ENCODE measurements at regions of chr6 and their contacts with region 1.

Region 1: GRCh38 chr6:11144393-11144851 is 32.9 kb upstream of the ERVFRD-1 start:
- DNase-seq: peak; percentile 81
- H3K4me3 Mint-ChIP-seq: no peak overlapping the region
- H3K27ac Mint-ChIP-seq: peak overlapping the region; percentile 87
- H3K4me1 Mint-ChIP-seq: peaks cover 36% of the 10 kb centered on the region
- H3K27me3 Mint-ChIP-seq: no peaks in the 10 kb centered on the region
- CTCF ChIP-seq: peak; percentile 91

Region 2: GRCh38 chr6:10676403-10676802 is 468.0 kb before region 1 on chr6:
- CTCF ChIA-PET with region 1: no interaction called
- POLR2A ChIA-PET with region 1: no interaction called
- intact Hi-C with region 1: no loop called
- DNase-seq: no peak
- H3K4me3 Mint-ChIP-seq: no peak overlapping the region
- H3K27ac Mint-ChIP-seq: no peak overlapping the region
- H3K4me1 Mint-ChIP-seq: no peaks in the 10 kb centered on the region
- H3K27me3 Mint-ChIP-seq: no peaks in the 10 kb centered on the region
- CTCF ChIP-seq: no peak

Region 3: GRCh38 chr6:11064836-11065235 is 79.6 kb before region 1 on chr6:
- CTCF ChIA-PET with region 1: no interaction called
- POLR2A ChIA-PET with region 1: no interaction called
- intact Hi-C with region 1: loop called (anchors 2 kb)
- DNase-seq: no peak
- H3K4me3 Mint-ChIP-seq: no peak overlapping the region
- H3K27ac Mint-ChIP-seq: no peak overlapping the region
- H3K4me1 Mint-ChIP-seq: no peaks in the 10 kb centered on the region
- H3K27me3 Mint-ChIP-seq: no peaks in the 10 kb centered on the region
- CTCF ChIP-seq: no peak

Region 4: DNA sequence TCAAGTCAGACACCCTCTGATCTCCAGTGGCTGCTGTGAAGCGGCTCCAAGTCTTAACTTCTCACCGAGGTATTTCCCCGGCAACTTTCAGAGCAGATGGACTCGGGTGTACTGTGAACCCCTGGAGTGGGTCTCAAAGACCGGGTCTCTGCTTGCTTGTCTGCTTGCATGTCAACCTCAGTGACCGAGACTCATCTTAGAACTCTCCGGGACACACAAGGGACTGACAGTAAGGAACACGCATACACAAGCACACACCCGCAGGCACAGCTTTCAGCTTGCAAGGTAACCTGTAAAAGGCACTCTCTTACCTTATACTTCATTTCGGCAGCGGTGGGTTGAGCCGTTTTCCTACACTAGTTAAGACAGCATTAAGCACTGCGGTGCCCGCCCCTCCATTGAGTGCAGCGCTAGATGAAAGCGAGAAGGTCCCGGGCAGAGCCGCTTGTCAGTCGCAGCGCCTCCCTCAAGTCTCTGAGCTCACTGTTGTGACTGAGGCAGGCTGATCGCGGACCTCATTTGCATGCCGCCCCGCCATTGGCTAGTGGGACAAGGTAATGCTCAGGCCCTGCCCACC is 87.9 kb after region 1 on chr6 and contains the start of gene NEDD9:
- CTCF ChIA-PET with region 1: no interaction called
- POLR2A ChIA-PET with region 1: interaction called, 11 read pairs
- intact Hi-C with region 1: loop called (anchors 2 kb)
- DNase-seq: peak; percentile 97
- H3K4me3 Mint-ChIP-seq: peak within 1 kb of the TSS; percentile 73
- H3K27ac Mint-ChIP-seq: peak within 1 kb of the TSS; percentile 85
- H3K4me1 Mint-ChIP-seq: peaks cover 41% of the 10 kb centered on the region
- H3K27me3 Mint-ChIP-seq: no peaks in the 10 kb centered on the region
- CTCF ChIP-seq: no peak
- total RNA-seq, gene NEDD9: 2.2 and 4.4 TPM in 2 replicates

Region 5: DNA sequence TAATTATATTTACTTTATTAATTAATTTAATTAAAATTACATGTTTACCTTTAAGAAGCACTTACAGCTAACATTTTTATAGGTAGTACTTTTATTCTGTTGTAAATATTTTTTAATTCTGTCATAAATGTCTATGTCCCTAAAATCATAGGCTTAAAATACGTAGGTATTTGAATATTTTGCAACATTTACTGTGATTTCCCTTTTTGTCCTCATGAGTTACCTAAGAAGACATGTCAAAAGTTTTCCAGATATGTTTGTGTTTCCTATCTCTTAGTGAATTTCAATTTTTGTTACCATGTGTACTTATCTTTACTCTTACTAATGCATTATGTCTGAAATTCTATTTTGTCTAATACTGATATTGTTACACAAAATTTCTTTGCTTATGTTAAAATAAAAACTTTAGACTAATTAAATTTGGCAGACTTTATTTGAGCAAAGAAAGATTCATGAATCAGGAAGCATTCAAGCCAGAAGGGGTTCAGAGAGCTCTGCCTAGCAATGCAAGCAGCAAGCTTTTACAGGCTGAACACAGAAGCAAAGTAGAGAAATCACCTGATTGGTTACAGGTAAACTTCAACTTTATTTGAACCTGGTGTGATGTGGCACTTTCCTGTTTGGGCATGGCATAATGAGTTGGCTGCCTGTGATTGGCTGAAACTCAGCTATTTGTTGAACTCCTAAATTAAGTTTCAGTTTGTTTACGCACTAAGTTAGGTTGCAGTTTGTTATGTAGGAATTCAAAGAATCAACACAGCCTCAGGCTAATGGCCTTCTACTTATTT is 269.9 kb after region 1 on chr6:
- CTCF ChIA-PET with region 1: no interaction called
- POLR2A ChIA-PET with region 1: no interaction called
- intact Hi-C with region 1: loop called (anchors 5 kb)
- DNase-seq: peak; percentile 70
- H3K4me3 Mint-ChIP-seq: no peak overlapping the region
- H3K27ac Mint-ChIP-seq: no peak overlapping the region
- H3K4me1 Mint-ChIP-seq: peaks cover 6% of the 10 kb centered on the region
- H3K27me3 Mint-ChIP-seq: no peaks in the 10 kb centered on the region
- CTCF ChIP-seq: no peak

Region 6: DNA sequence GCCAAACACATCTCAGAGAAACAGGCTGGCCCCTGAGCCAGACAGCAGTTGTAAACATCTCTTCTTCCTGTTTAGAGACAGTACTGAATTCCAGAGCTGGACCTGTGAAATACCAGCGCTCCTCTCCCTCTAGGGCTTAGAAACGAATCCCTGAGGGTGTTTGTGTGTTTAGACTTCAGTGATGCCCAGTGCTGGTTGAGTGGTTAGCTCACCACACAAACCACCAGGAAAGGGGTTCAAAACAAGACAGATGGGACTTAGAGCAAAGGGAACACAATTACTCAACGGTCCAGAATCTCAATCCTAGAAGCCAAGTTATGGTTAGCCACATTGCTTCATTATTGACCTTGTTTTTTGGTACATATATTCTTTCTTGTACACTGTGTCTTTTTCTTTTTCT is 284.5 kb after region 1 on chr6:
- CTCF ChIA-PET with region 1: no interaction called
- POLR2A ChIA-PET with region 1: no interaction called
- intact Hi-C with region 1: no loop called
- DNase-seq: peak; percentile 53
- H3K4me3 Mint-ChIP-seq: no peak overlapping the region
- H3K27ac Mint-ChIP-seq: peak overlapping the region; percentile 53
- H3K4me1 Mint-ChIP-seq: peaks cover 26% of the 10 kb centered on the region
- H3K27me3 Mint-ChIP-seq: no peaks in the 10 kb centered on the region
- CTCF ChIP-seq: no peak

Region 7: GRCh38 chr6:12147557-12148316 is 1003.3 kb after region 1 on chr6:
- CTCF ChIA-PET with region 1: no interaction called
- POLR2A ChIA-PET with region 1: no interaction called
- intact Hi-C with region 1: no loop called
- DNase-seq: no peak
- H3K4me3 Mint-ChIP-seq: no peak overlapping the region
- H3K27ac Mint-ChIP-seq: peak overlapping the region; percentile 50
- H3K4me1 Mint-ChIP-seq: peaks cover 17% of the 10 kb centered on the region
- H3K27me3 Mint-ChIP-seq: no peaks in the 10 kb centered on the region
- CTCF ChIP-seq: no peak